HCT116 (cell line): ENCODE measurements at regions of chr10 and their contacts with region 1.

Region 1: GRCh38 chr10:905503-905902 is 26.0 kb downstream of the LARP4B start:
- DNase-seq: no peak
- ATAC-seq: no peak; the same call in 1 of the 2 replicates
- H3K4me3 ChIP-seq: no peak overlapping the region
- H3K27ac ChIP-seq: no peak overlapping the region
- H3K4me1 ChIP-seq: no peaks in the 10 kb centered on the region
- H3K27me3 ChIP-seq: no peaks in the 10 kb centered on the region
- CTCF ChIP-seq: no peak
- POLR2A ChIP-seq: no peak
- RAD21 ChIP-seq: no peak

Region 2: DNA sequence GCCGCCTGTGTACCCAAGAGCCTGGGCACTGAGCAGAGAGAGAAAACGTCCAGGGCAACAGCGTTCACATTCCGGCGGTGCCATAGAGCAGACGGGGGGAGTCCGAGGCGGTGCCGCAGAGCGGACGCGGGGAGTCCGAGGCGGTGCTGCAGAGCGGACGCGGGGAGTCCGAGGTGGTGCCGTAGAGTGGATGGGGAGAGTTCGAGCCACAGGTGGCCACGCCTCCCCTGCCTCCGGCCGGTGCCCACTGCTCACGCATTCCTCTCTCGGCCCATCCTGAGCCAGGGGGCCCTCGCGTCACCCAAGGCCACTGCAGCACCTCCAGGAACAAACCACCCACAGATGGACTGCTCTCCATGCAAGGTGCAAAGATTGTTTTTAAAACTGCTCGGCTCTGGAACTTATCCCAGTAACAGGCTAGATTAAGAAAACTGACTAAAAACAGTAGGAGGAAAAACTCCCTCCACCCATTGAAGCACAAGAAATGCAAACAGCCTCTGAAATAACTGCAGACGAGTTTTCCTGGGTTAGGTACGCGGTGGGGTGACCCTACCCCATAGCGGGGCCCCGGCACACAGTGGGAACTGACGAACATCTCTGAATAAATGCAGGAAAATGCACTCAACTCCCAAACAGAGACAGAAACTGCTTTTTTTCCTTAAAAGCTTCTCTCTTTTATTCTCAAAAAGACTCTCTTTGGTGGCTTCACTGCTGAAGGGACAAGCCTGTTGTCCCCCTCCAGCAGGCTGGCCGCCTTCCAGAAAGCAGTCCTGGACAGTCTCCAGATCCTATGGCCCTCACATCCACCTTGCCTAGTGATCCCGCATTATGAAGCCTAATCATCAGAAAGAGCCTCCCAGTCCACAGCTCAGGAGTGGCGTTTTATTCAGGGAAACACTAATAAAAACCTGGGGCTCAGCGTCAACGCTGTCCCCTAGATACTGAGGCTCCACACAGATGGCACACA is 271.9 kb before region 1 on chr10:
- CTCF ChIA-PET with region 1: no interaction called
- POLR2A ChIA-PET with region 1: no interaction called
- RAD21 ChIA-PET with region 1: no interaction called
- intact Hi-C with region 1: no loop called
- DNase-seq: no peak
- ATAC-seq: no peak
- H3K4me3 ChIP-seq: no peak overlapping the region
- H3K27ac ChIP-seq: no peak overlapping the region
- H3K4me1 ChIP-seq: no peaks in the 10 kb centered on the region
- H3K27me3 ChIP-seq: no peaks in the 10 kb centered on the region
- CTCF ChIP-seq: no peak
- POLR2A ChIP-seq: no peak
- RAD21 ChIP-seq: no peak

Region 3: DNA sequence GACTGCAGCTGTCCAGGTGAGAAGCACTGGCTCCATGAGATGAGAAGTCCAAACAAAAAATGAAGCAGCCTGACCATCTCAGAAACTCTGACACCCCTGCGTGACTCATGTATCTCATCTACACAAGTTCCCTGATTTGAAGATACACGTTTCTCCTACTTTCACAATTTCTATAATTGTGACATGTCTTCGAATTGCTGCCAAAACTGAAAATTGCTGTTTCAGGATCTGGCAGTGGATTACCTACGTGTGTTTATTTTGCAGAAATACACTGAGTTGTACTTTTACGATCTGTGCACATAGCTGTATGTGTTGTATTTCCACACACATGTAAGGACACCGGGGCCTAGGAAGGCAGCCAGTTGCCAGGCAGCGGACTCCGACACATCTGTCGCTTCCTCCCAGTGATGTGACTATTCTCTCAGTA is 27.2 kb before region 1 on chr10:
- CTCF ChIA-PET with region 1: no interaction called
- POLR2A ChIA-PET with region 1: no interaction called
- RAD21 ChIA-PET with region 1: no interaction called
- intact Hi-C with region 1: loop called (anchors 1 kb)
- DNase-seq: no peak
- ATAC-seq: no peak
- H3K4me3 ChIP-seq: no peak overlapping the region
- H3K27ac ChIP-seq: no peak overlapping the region
- H3K4me1 ChIP-seq: no peaks in the 10 kb centered on the region
- H3K27me3 ChIP-seq: no peaks in the 10 kb centered on the region
- CTCF ChIP-seq: no peak
- POLR2A ChIP-seq: no peak
- RAD21 ChIP-seq: no peak